Left ventricle myocardium inferior (tissue), 1 donor: ENCODE measurements at regions of chr16 and their contacts with region 1.

Region 1: DNA sequence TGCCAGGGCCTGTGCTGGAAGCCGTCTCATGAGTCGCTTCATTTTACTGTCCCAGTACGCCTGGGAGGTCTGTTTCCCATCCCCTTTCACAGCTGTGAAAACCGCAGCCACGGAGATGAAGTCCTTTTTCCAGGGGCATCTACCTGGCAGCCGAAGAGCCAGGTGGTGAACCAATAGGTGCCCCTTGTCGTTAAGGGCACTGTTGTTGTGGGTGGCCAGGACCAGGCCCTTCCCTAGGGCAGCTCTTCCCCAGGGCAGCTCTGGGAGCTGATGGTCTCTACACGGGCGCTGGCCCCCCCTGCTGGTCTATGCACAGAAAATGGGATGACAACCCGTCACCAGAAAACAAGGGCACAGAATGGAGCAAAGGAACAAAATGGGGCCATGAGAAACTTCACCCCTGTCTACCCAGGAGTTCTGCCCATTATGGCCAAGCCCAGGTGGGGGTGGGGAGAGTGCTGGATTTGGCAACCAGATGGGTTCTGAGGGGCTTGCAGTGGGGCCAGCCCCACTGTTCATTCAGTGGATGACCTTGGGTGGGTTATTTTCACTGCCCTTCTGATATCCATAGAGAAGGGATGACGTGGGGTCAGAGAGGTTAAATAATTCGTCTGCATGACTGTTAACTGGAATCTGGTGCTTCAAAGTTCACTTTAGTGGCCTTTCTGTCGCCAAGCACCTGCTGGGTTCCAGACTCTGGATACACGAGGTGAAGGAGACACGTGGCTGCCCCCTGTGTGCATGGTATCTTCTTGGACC is 11.5 kb downstream of the RMI2 start:
- DNase-seq: peak; percentile 63
- H3K4me3 ChIP-seq: no peak overlapping the region
- H3K27ac ChIP-seq: peak overlapping the region; percentile 88
- H3K4me1 ChIP-seq: peaks cover 41% of the 10 kb centered on the region
- H3K27me3 ChIP-seq: no peaks in the 10 kb centered on the region
- CTCF ChIP-seq: peak; percentile 67

Region 2: GRCh38 chr16:10971560-10971961 is 385.2 kb before region 1 on chr16:
- intact Hi-C with region 1: loop called (anchors 10 kb)
- DNase-seq: no peak
- H3K4me3 ChIP-seq: no peak overlapping the region
- H3K27ac ChIP-seq: no peak overlapping the region
- H3K4me1 ChIP-seq: peaks cover 28% of the 10 kb centered on the region
- H3K27me3 ChIP-seq: no peaks in the 10 kb centered on the region
- CTCF ChIP-seq: peak; percentile 84

Region 3: DNA sequence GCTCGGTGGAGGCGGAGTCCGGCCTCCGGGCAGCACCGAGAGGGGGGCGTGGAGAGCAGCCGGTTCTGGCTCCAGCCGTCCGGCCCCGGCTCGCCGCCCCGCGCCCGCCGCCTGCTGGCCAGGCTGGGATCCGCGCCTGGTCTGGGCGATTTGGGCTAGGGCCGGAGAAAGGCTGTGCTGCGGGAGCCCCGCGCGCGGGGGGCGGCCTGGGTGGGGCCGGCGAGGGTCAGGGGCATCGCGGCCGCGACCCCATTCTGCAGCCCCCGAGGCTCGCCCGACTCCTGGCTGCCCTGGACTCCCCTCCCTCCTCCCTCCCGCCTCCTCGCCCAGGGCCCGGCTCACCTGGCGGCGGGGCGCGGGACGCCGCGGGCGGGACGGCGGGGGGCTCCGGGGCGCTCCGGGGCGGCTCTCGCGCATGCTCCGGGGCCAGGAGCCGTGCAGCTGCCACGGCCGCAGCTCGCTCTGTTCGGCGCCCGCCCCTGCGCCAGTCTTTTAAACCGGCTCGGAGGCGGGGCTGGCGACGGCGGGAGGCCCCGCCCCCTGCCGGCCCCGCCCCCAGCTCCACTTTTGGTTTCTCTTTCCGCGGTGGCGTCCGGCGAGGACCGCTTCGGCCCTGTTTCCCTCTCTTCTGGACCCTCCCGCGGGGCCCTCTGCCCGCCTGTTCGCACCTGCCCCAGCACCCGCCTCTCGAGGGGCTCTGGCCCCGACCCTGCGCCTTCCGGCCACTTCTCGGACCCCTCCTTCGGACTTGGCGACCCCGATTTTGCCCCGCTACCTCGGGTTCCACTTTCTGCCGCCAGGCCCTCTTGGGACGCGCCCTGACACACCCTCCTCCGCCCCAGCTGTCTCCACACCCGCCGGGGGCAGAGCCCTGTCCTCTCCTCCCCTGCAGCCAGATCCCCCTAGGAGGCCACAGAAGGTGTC is 100.8 kb before region 1 on chr16 and contains the start of gene SOCS1:
- intact Hi-C with region 1: loop called (anchors 10 kb)
- DNase-seq: peak; percentile 87
- H3K4me3 ChIP-seq: peak within 1 kb of the TSS; percentile 90
- H3K27ac ChIP-seq: peak within 1 kb of the TSS; percentile 100
- H3K4me1 ChIP-seq: peaks cover 58% of the 10 kb centered on the region
- H3K27me3 ChIP-seq: no peaks in the 10 kb centered on the region
- CTCF ChIP-seq: peak; percentile 94
- total RNA-seq, gene SOCS1: 2.9 TPM

Region 4: DNA sequence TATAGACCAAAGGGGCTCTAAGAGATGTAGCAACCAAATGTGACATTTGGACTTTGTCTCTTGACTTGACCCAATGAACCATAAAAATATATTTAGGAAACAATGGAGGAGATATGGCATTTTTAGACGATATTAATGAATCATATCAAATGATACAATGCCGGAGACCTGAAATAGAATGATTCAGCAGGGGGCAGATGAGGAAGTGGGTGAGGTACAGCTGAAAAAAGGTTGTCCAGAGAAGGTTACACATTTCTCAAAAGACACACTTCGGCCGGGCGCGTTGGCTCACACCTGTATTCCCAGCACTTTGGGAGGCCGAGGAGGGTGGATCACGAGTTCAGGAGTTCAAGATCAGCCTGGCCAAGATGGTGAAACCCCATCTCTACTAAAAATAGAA is 295.0 kb after region 1 on chr16:
- intact Hi-C with region 1: no loop called
- DNase-seq: no peak
- H3K4me3 ChIP-seq: no peak overlapping the region
- H3K27ac ChIP-seq: no peak overlapping the region
- H3K4me1 ChIP-seq: no peaks in the 10 kb centered on the region
- H3K27me3 ChIP-seq: no peaks in the 10 kb centered on the region
- CTCF ChIP-seq: no peak

Region 5: GRCh38 chr16:11675561-11676511 is 319.1 kb after region 1 on chr16:
- intact Hi-C with region 1: no loop called
- DNase-seq: peak; percentile 44
- H3K4me3 ChIP-seq: no peak overlapping the region
- H3K27ac ChIP-seq: peak overlapping the region; percentile 85
- H3K4me1 ChIP-seq: peaks cover 100% of the 10 kb centered on the region
- H3K27me3 ChIP-seq: no peaks in the 10 kb centered on the region
- CTCF ChIP-seq: no peak